ENCODE measurements at regions of chr6 and their contacts with region 1.

Region 1: DNA sequence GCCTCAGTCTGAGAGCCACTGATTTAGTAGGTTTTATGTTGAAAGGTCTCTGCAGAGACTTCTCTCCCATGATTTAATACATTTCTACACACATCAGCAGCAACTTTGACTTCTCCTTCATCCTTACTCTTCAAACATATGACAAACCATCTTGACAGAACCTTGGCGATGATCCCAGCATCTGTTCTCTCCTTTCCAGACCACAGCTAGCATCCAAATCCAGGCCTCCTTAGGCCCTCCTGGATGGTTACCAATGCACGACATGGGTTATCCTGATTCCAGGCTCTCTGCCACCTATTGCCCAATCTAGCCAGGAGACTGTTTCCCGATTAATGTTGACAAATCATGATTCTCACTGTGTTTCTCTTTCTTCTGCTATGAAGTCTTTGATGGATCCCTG is 16.8 kb downstream of the LAMA4 start:
- DNase-seq: no peak
- H3K4me3 Mint-ChIP-seq: no peak overlapping the region
- H3K27ac Mint-ChIP-seq: no peak overlapping the region
- H3K4me1 Mint-ChIP-seq: peaks cover 35% of the 10 kb centered on the region
- H3K27me3 Mint-ChIP-seq: peaks cover 42% of the 10 kb centered on the region

Region 2: DNA sequence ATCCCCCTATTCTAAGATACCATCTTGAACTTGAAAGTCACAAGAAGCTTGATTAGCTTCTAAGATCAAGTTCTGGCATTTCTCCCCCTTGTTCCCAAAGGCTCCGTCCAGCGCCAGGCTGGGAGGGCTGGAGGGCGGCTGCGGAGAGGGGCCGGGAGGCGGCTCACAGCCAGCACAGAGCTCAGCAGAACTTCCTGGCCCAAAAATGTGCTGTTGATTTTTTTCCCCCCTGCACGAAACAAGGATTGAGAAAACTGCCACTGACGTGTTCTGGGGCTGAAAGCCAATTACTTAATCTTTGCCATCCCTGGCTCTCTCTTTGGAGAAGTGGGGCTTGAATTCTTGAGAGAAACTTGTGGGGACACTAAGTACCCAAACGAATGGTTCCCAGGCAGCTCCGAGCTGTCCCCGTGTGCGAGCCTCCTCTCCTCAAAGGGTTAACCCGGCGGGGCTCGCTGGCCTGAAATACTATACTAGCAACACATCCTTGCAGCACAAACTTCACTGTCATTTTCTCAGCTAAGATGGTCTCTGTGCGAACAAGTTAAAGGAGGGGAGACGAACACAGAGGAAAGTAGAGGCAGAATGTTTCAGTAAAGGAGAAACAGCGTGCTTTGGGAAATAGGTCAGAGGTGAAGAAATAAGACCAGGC is 632.4 kb before region 1 on chr6:
- intact Hi-C with region 1: no loop called
- DNase-seq: peak; percentile 15
- H3K4me3 Mint-ChIP-seq: peak overlapping the region; percentile 90
- H3K27ac Mint-ChIP-seq: peak overlapping the region; percentile 98
- H3K4me1 Mint-ChIP-seq: peaks cover 49% of the 10 kb centered on the region
- H3K27me3 Mint-ChIP-seq: no peaks in the 10 kb centered on the region

Region 3: GRCh38 chr6:112203577-112204349 is 33.8 kb before region 1 on chr6:
- intact Hi-C with region 1: loop called (anchors 5 kb)
- DNase-seq: no peak
- H3K4me3 Mint-ChIP-seq: peak overlapping the region; percentile 51
- H3K27ac Mint-ChIP-seq: no peak overlapping the region
- H3K4me1 Mint-ChIP-seq: peaks cover 8% of the 10 kb centered on the region
- H3K27me3 Mint-ChIP-seq: peaks cover 28% of the 10 kb centered on the region

Region 4: GRCh38 chr6:112289038-112289566 is 51.5 kb after region 1 on chr6:
- intact Hi-C with region 1: loop called (anchors 1 kb)
- DNase-seq: no peak
- H3K4me3 Mint-ChIP-seq: no peak overlapping the region
- H3K27ac Mint-ChIP-seq: no peak overlapping the region
- H3K4me1 Mint-ChIP-seq: peaks cover 22% of the 10 kb centered on the region
- H3K27me3 Mint-ChIP-seq: peaks cover 66% of the 10 kb centered on the region

Region 5: GRCh38 chr6:112490316-112490715 is 252.7 kb after region 1 on chr6:
- intact Hi-C with region 1: no loop called
- DNase-seq: no peak
- H3K4me3 Mint-ChIP-seq: no peak overlapping the region
- H3K27ac Mint-ChIP-seq: no peak overlapping the region
- H3K4me1 Mint-ChIP-seq: no peaks in the 10 kb centered on the region
- H3K27me3 Mint-ChIP-seq: no peaks in the 10 kb centered on the region

Measured in activated T-helper 2 cell treated with anti-CD3 and anti-CD28 coated beads, Interferon-gamma antibody, Interleukin-2, Interleukin-4, amounts not matched to agents 10 μg/mL and 5 μg/mL and 100 μg/mL, durations not matched to agents 14 hours and 24 hours and 36 hours (primary cell).